HAP-1 (cell line): ENCODE measurements at regions of chr2 and their contacts with region 1.

Region 1: GRCh38 chr2:156892467-156893281 is 364.8 kb upstream of the GALNT5 start:
- DNase-seq: peak; percentile 36 to 89
- H3K4me3 ChIP-seq: peak overlapping the region; percentile 15
- H3K4me1 ChIP-seq: peaks cover 33% of the 10 kb centered on the region
- H3K27me3 ChIP-seq: no peaks in the 10 kb centered on the region

Region 2: DNA sequence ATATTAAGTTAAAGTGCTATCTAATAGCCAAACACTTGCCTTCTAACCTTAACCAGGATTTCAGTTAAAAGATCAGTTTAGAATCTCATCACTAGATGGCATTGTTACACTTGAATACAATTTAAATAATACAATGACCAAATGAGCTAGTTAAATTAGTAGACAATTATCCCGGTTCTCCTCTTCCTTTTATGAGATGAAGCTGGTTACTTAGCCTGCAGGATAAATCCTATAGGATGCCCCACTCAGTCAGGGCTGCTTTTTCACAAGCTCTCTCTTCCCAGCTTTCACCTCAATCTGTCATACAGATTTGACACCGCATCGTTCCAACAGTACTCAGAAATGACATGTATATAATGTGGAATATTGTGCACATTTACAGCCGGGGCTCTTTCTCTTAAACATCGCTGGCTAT is 1515.4 kb before region 1 on chr2:
- in situ Hi-C with region 1: loop called (anchors 25 kb)
- DNase-seq: peak in 1 of 2 experiments; percentile 77
- H3K4me3 ChIP-seq: no peak overlapping the region
- H3K4me1 ChIP-seq: 0 out of 2 replicates have a peak, but pooled peaks cover 4% of the 10 kb centered on the region
- H3K27me3 ChIP-seq: no peaks in the 10 kb centered on the region

Region 3: DNA sequence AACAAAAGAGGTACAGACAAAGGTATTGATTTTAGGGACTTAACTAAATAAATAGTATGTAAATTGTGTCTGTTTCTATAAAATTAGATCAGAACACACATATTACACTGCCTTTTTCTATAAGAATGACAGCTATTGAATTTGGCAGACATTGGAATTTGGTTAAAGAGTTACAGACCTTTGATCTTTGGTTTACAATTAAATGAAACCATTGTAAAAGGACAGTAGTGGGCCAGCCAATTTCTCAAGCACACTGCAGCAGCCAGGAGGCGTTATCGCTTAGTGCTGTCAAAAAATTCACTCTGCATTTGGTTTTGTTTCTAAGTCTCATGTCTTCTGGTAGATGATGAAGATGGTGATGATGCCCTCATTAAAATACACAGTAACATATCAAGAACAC is 736.1 kb before region 1 on chr2:
- in situ Hi-C with region 1: loop called (anchors 25 kb)
- DNase-seq: peak; percentile 50 to 92
- H3K4me3 ChIP-seq: no peak overlapping the region
- H3K4me1 ChIP-seq: peaks cover 49% of the 10 kb centered on the region
- H3K27me3 ChIP-seq: no peaks in the 10 kb centered on the region

Region 4: DNA sequence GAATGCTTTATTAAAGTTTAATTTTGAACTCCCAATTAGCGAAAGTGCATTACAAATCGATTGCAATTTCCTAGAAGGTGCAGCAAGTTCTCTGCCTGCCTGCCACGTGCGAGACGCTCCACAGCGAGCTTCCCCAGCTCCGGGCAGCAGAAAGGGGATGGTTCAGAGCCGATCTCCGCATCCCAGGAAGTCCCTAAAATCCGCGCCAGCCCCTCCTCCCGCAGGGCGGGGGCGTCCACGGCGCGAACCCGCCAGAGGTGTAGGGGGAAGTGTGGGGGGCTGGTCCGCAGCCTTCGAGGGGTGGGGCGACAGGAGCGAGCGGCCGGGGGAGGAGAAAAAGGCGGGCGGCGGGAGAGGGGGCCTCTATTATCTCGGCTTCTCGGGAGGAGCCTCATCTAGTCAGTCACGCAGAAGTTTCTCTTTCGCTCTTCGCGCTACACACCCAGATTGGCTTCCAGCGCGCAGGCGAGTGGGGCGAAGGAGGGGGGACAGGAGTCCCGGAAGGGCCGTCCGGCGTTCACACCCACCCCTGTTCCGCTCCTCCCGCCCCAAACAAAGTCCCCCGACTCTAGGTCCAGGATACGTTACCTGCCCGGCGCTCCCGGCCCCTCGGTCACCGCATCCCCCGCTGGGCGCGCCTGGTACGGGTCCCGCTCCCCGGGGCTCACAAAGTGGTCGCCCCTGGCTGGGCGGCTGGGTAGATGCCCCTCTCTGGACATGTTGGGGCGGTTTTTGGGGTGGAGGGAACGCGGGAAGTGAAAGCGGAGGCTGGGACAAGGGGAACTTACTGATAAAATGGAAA is 551.0 kb before region 1 on chr2:
- in situ Hi-C with region 1: loop called (anchors 25 kb)
- DNase-seq: peak; percentile 96 to 97
- H3K4me3 ChIP-seq: peak overlapping the region; percentile 86
- H3K4me1 ChIP-seq: peaks cover 47% of the 10 kb centered on the region
- H3K27me3 ChIP-seq: no peaks in the 10 kb centered on the region

Region 5: GRCh38 chr2:156589381-156590079 is 303.1 kb before region 1 on chr2:
- in situ Hi-C with region 1: loop called (anchors 25 kb)
- DNase-seq: peak; percentile 32 to 71
- H3K4me3 ChIP-seq: no peak overlapping the region
- H3K4me1 ChIP-seq: peaks cover 45% of the 10 kb centered on the region
- H3K27me3 ChIP-seq: no peaks in the 10 kb centered on the region

Region 6: DNA sequence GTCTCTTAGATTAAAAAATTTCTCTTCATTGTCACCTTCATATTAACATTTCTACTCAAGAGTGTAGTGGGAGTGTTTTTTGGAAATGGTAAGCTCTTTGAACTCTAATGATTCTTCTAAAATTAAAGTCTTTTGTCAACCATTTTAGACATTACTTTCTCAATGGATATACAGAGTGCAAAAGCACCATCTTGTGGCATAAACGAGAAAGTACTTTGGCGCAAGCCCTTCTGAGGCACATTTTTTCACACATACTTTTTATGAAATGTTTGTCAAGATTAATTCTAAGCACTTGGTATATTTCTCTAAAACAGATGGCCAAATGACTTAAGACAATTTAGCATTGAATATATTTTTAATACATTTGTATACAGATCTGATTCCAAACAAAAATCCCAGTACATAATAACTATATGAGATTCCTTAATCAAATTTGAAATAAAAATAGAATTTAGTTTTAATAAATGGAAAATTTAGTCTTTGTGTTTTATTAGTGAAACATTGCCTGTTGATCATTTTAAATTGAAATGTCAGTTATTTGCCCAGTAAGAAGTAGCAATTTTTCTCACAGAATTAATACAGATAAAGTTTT is 301.5 kb after region 1 on chr2:
- in situ Hi-C with region 1: loop called (anchors 25 kb)
- DNase-seq: peak; percentile 41 to 65
- H3K4me3 ChIP-seq: no peak overlapping the region
- H3K4me1 ChIP-seq: peaks cover 4% of the 10 kb centered on the region
- H3K27me3 ChIP-seq: no peaks in the 10 kb centered on the region

Region 7: GRCh38 chr2:157611110-157611509 is 718.4 kb after region 1 on chr2:
- in situ Hi-C with region 1: no loop called
- DNase-seq: no peak
- H3K4me3 ChIP-seq: no peak overlapping the region
- H3K4me1 ChIP-seq: no peaks in the 10 kb centered on the region
- H3K27me3 ChIP-seq: no peaks in the 10 kb centered on the region; the same call in 1 of the 2 replicates